MCF 10A (cell line): ENCODE measurements at regions of chr14 and their contacts with region 1.

Region 1: DNA sequence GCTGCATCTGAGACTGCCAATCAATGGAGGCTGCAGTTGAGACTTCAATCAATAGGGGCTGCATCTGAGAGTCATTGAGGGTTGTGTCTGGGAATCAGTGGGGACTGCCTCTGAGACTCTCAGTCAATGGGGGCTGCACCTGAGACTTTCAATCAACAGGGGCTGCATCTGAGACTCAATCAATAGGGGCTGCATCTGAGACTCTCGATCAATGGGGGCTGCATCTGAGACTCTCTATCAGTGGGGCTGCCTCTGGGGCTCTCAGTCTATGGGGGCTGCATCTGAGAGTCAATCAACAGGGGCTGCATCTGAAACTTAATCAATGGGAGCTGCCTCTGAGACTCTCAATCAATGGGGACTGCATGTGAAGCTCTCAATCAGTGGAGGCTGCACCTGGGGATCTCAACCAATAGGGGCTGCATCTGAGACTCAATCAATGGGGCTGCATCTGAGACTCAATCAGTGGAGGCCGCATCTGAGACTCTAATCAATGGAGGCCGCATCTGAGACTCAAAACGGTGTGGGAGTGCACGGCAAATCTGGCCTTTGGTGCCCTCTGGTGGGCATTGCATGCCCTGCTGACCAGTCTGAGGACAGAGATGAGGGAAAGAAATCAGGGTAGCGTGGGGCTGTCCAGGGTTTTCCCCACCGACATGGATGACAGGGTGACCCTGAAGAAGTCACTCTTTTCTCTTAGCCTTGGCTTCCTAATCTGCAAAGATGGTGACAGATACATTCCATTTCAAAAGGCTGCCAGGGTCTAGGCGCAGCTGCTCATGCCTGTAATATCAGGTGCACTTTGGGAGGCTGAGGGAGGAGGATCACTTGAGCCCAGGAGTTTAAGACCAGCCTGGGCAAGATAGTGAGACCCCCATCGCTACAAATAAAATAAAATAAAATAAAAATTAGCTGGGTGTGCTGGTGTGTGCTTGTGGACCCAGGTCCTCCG is 41.3 kb upstream of the EIF5 start:
- DNase-seq: peak; percentile 73
- H3K4me3 Mint-ChIP-seq: no peak overlapping the region
- H3K27ac Mint-ChIP-seq: no peak overlapping the region
- H3K4me1 Mint-ChIP-seq: no peaks in the 10 kb centered on the region
- H3K27me3 Mint-ChIP-seq: no peaks in the 10 kb centered on the region
- CTCF ChIP-seq: peak; percentile 94

Region 2: DNA sequence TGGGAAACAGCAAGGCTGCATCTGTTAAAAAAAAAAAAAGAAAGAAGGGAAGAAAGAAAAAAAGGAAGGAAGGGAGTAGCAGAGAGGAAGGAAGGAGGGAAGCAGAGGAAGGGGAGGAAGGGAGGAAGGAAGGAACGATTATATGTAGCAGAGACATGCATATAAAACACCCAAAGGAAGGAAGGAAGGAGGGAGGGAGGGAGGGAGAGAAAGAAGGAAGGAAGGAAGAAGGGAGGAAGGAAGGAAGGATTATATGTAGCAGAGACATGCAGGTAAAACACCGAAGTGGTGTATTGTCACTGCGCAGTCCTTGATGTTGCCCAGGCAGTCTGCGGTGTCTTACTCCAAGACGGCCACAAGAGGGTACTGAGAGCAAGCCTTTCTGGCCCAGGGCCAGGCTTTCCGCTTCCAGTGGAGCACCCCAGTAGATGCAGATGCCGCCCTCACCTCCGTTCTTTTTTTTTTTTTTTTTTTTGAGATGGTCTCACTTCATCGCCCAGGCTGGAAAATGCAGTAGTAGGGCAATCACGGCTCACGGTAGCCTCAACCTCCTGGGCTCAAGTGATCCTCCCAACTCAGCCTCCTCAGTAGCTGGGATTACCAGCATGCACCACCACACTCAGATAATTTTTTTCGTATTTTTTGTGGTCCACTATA is 214.5 kb before region 1 on chr14:
- CTCF ChIA-PET with region 1: interaction called, 10 read pairs
- POLR2A ChIA-PET with region 1: no interaction called
- intact Hi-C with region 1: loop called (anchors 1 kb)
- DNase-seq: peak; percentile 86
- H3K4me3 Mint-ChIP-seq: no peak overlapping the region
- H3K27ac Mint-ChIP-seq: no peak overlapping the region
- H3K4me1 Mint-ChIP-seq: peaks cover 6% of the 10 kb centered on the region
- H3K27me3 Mint-ChIP-seq: no peaks in the 10 kb centered on the region
- CTCF ChIP-seq: peak; percentile 62

Region 3: GRCh38 chr14:103185051-103185992 is 107.4 kb before region 1 on chr14:
- CTCF ChIA-PET with region 1: interaction called, 5 read pairs
- POLR2A ChIA-PET with region 1: no interaction called
- intact Hi-C with region 1: loop called (anchors 1 kb)
- DNase-seq: peak; percentile 67
- H3K4me3 Mint-ChIP-seq: no peak overlapping the region
- H3K27ac Mint-ChIP-seq: peak overlapping the region; percentile 78
- H3K4me1 Mint-ChIP-seq: peaks cover 5% of the 10 kb centered on the region
- H3K27me3 Mint-ChIP-seq: no peaks in the 10 kb centered on the region
- CTCF ChIP-seq: peak; percentile 59

Region 4: GRCh38 chr14:103281496-103282231 is 11.0 kb before region 1 on chr14:
- CTCF ChIA-PET with region 1: interaction called, 13 read pairs
- POLR2A ChIA-PET with region 1: no interaction called
- intact Hi-C with region 1: no loop called
- DNase-seq: peak; percentile 39
- H3K4me3 Mint-ChIP-seq: no peak overlapping the region
- H3K27ac Mint-ChIP-seq: no peak overlapping the region
- H3K4me1 Mint-ChIP-seq: peaks cover 14% of the 10 kb centered on the region
- H3K27me3 Mint-ChIP-seq: no peaks in the 10 kb centered on the region
- CTCF ChIP-seq: peak; percentile 11

Region 5: DNA sequence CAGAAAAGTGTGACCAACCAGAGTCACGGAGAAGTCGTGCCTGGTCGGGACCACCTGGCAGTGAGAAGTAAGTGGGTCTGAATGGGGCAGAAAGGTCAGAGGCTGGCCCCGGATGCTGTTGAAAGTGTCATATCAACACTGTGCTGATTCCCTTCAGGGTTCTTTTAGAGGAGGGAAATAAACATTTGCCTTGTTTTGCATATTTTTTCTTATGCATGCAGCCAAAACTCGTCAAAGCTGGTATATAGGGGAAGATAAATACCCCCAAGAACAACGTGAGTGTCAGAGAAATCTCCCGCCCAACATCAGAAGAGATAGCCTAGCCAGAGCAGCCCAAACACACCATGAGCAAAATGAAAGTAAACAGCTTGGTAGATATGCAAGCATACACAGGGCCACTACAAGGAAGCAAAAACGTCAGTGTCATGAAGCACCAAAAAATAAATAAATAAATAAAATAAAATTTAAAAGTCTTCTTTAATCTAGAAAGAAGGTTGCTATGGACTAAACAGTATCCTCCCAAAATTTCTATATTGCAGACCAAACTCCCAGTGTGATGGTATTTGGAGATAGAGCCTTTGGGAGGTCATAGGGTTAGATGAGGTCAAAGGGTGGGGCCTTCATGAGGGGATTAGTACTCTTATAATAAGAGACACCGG is 63.5 kb after region 1 on chr14:
- CTCF ChIA-PET with region 1: no interaction called
- POLR2A ChIA-PET with region 1: no interaction called
- intact Hi-C with region 1: no loop called
- DNase-seq: no peak
- H3K4me3 Mint-ChIP-seq: no peak overlapping the region
- H3K27ac Mint-ChIP-seq: no peak overlapping the region
- H3K4me1 Mint-ChIP-seq: peaks cover 6% of the 10 kb centered on the region
- H3K27me3 Mint-ChIP-seq: no peaks in the 10 kb centered on the region
- CTCF ChIP-seq: no peak

Region 6: GRCh38 chr14:103483600-103483999 is 190.9 kb after region 1 on chr14:
- CTCF ChIA-PET with region 1: no interaction called
- POLR2A ChIA-PET with region 1: no interaction called
- intact Hi-C with region 1: no loop called
- DNase-seq: peak; percentile 97
- H3K4me3 Mint-ChIP-seq: no peak overlapping the region
- H3K27ac Mint-ChIP-seq: peak overlapping the region; percentile 42
- H3K4me1 Mint-ChIP-seq: peaks cover 14% of the 10 kb centered on the region
- H3K27me3 Mint-ChIP-seq: no peaks in the 10 kb centered on the region
- CTCF ChIP-seq: no peak